GM10248 (cell line): ENCODE measurements at regions of chr3 and their contacts with region 1.

Region 1: GRCh38 chr3:150434234-150434633 is 26.1 kb downstream of the TSC22D2 start:
- DNase-seq: no peak
- CTCF ChIP-seq: no peak

Region 2: GRCh38 chr3:149224736-149225594 is 1209.3 kb before region 1 on chr3:
- CTCF ChIA-PET with region 1: no interaction called
- POLR2A ChIA-PET with region 1: no interaction called
- DNase-seq: peak; percentile 67
- CTCF ChIP-seq: no peak

Region 3: GRCh38 chr3:150419076-150419868 is 15.0 kb before region 1 on chr3:
- CTCF ChIA-PET with region 1: interaction called, 13 read pairs
- POLR2A ChIA-PET with region 1: no interaction called
- DNase-seq: no peak
- CTCF ChIP-seq: no peak